AG04450 (cell line): ENCODE measurements at regions of chr5 and their contacts with region 1.

Region 1: DNA sequence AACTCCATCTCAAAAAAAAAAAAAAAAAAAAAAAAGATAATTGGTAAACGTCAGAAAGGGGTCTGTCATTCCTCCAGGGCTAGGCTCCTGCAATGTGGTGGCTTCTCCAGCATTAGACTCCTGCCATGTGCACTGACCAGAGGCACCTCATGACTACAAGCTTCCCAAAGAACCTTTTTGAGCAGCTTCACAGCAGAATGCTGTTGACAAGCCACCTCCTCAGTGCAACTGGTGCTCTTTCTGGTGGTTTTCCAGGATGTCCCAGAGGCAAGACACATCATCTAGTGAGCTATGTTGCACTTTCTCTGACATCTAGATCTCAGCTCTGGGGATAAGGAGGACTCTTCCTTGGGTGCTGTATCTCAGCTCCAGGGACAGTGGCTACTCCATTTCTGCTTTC is 11.6 kb downstream of the RPL37 start:
- DNase-seq: no peak
- H3K4me3 ChIP-seq: no peak overlapping the region
- H3K27ac ChIP-seq: no peak overlapping the region
- H3K27me3 ChIP-seq: no peaks in the 10 kb centered on the region
- CTCF ChIP-seq: no peak

Region 2: DNA sequence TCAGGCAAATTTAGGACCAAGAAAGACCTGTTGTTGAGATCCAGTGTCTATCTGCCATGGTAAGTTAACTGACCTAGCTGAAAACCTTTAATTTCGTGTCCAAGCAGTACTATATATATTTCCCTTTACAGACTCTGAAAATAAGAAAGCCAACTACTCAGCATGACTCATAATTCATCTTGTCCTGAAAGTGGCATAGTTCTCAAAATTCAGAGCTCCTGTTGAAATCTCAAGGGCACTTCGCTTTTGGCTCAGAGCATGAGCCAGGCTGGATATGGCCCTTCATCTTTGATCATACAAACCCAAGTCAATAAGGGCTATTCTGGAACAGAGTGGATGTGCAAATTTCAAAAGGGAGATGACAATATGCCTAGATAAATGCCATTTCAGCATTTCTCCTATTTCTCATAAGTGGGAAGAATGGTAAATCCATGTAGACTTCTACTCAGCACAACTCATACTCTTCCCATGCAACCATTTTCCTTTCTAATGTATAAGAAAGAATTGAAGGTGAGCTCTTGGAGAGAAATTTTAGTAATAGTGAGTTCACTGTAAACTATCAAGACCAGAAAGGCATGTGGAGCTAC is 830.7 kb before region 1 on chr5:
- CTCF ChIA-PET with region 1: no interaction called
- POLR2A ChIA-PET with region 1: no interaction called
- DNase-seq: no peak
- H3K4me3 ChIP-seq: no peak overlapping the region
- H3K27ac ChIP-seq: no peak overlapping the region
- H3K27me3 ChIP-seq: no peaks in the 10 kb centered on the region
- CTCF ChIP-seq: no peak

Region 3: DNA sequence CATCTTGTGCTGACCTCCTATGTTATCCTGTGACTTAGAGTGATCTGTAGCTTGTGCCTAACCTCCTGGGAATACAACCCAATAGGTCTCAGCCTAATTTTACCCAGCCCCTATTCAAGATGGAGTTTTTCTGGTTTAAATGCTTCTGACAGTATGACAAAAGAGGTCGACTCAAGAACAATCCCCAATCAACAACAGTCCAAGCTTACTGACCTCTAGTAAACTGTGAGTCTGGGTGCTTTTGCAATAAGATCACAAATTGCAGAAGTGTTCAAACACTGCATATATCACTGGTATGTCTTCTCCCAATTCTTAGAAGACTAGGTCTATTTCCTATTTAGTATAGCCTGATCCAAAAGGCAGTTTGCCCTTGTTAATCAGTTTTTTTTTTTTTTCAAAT is 467.2 kb before region 1 on chr5:
- CTCF ChIA-PET with region 1: no interaction called
- POLR2A ChIA-PET with region 1: no interaction called
- DNase-seq: no peak
- H3K4me3 ChIP-seq: no peak overlapping the region
- H3K27ac ChIP-seq: no peak overlapping the region
- H3K27me3 ChIP-seq: no peaks in the 10 kb centered on the region
- CTCF ChIP-seq: no peak

Region 4: GRCh38 chr5:40798012-40798855 is 25.2 kb before region 1 on chr5 and contains the start of gene PRKAA1:
- CTCF ChIA-PET with region 1: no interaction called
- POLR2A ChIA-PET with region 1: interaction called, 13 read pairs
- DNase-seq: peak; percentile 59
- H3K4me3 ChIP-seq: peak within 1 kb of the TSS; percentile 96
- H3K27ac ChIP-seq: peak within 1 kb of the TSS; percentile 96
- H3K27me3 ChIP-seq: no peaks in the 10 kb centered on the region
- CTCF ChIP-seq: peak; percentile 59
- polyA plus RNA-seq, gene PRKAA1: 79.1 and 107 TPM in 2 replicates

Region 5: GRCh38 chr5:40834849-40835787 is 11.7 kb after region 1 on chr5 and contains the start of gene RPL37:
- CTCF ChIA-PET with region 1: no interaction called
- POLR2A ChIA-PET with region 1: interaction called, 11 read pairs
- DNase-seq: peak; percentile 93
- H3K4me3 ChIP-seq: peak within 1 kb of the TSS; percentile 98
- H3K27ac ChIP-seq: peak within 1 kb of the TSS; percentile 97
- H3K27me3 ChIP-seq: no peaks in the 10 kb centered on the region
- CTCF ChIP-seq: no peak
- polyA plus RNA-seq, gene RPL37: 4,632 and 5,076 TPM in 2 replicates

Region 6: DNA sequence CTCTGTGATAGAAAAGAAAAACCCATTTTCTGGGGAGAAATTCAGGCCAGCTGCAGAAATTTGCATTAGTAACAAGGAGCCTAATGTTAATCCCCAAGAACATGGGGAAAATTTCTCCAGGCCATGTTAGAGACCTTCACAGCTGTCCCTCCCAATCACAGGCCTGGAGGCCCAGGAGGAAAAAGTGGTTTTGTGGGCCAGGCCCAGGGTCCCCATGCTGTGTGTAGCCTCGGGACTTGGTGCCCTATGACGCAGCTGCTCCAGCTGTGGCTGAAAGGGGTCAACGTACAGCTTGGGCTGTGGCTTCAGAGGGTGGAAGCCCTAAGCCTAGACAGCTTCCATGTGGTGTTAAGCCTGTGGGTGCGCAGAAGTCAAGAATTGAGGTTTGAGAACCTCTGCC is 58.8 kb after region 1 on chr5:
- CTCF ChIA-PET with region 1: no interaction called
- POLR2A ChIA-PET with region 1: no interaction called
- DNase-seq: no peak
- H3K4me3 ChIP-seq: no peak overlapping the region
- H3K27ac ChIP-seq: no peak overlapping the region
- H3K27me3 ChIP-seq: no peaks in the 10 kb centered on the region
- CTCF ChIP-seq: no peak

Region 7: DNA sequence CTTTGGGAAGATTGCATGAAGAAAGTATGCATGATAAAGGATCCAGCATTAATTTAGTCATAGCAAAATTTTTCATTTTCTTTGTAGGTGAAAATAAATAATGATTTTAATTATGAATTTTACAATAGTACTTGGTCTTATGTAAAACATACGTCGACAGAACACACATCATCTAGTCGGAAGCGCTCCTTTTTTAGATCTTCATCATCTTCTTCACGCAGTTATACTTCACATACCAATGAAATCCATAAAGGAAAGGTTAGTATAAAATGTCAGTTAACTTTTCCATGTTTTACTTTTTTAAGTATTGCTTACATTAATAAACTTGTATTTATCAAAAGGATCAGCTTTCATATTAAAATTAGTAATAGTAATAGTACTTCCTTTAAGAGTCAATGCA is 121.7 kb after region 1 on chr5:
- CTCF ChIA-PET with region 1: no interaction called
- POLR2A ChIA-PET with region 1: no interaction called
- DNase-seq: no peak
- H3K4me3 ChIP-seq: no peak overlapping the region
- H3K27ac ChIP-seq: no peak overlapping the region
- H3K27me3 ChIP-seq: no peaks in the 10 kb centered on the region
- CTCF ChIP-seq: no peak